ENCODE measurements at regions of chr4 and their contacts with region 1.

Region 1: GRCh38 chr4:75995727-75996126 is 5.0 kb upstream of the SDAD1 start:
- DNase-seq: no peak
- ATAC-seq: peak; percentile 38 to 61 (median 45)
- H3K4me3 ChIP-seq: no peak overlapping the region
- H3K27ac ChIP-seq: no peak overlapping the region
- H3K4me1 ChIP-seq: no peaks in the 10 kb centered on the region
- H3K27me3 ChIP-seq: no peaks in the 10 kb centered on the region
- CTCF ChIP-seq: peak; percentile 38 to 69 (median 50)

Region 2: GRCh38 chr4:76067652-76068286 is 72.0 kb after region 1 on chr4:
- intact Hi-C with region 1: loop called (anchors 2 to 10 kb)
- DNase-seq: peak in 5 of 6 donors; percentile 61 to 83 (median 68)
- ATAC-seq: peak; percentile 88 to 97 (median 96)
- H3K4me3 ChIP-seq: no peak overlapping the region
- H3K27ac ChIP-seq: no peak overlapping the region
- H3K4me1 ChIP-seq: no peaks in the 10 kb centered on the region
- H3K27me3 ChIP-seq: no peaks in the 10 kb centered on the region
- CTCF ChIP-seq: peak; percentile 58 to 86 (median 71)

Region 3: GRCh38 chr4:76074468-76074867 is 78.7 kb after region 1 on chr4 and contains the start of gene ART3:
- intact Hi-C with region 1: loop called in 2 of 3 experiments (anchors 5 to 10 kb)
- DNase-seq: no peak
- ATAC-seq: no peak
- H3K4me3 ChIP-seq: no peak within 1 kb of the TSS
- H3K27ac ChIP-seq: no peak within 1 kb of the TSS
- H3K4me1 ChIP-seq: no peaks in the 10 kb centered on the region
- H3K27me3 ChIP-seq: no peaks in the 10 kb centered on the region
- CTCF ChIP-seq: no peak
- total RNA-seq, gene ART3: 0.32 to 7.5 (median 4.9) TPM

Measured in pancreas (tissue), 10 donors.